ENCODE measurements at regions of chr19 and their contacts with region 1.

Region 1: GRCh38 chr19:1780272-1780958 is 27.1 kb downstream of the ONECUT3 start:
- DNase-seq: no peak
- ATAC-seq: no peak
- H3K4me3 ChIP-seq: no peak overlapping the region
- H3K27ac ChIP-seq: no peak overlapping the region
- H3K4me1 ChIP-seq: no peaks in the 10 kb centered on the region
- H3K27me3 ChIP-seq: peaks cover 0 to 25% of the 10 kb centered on the region in 2 donors
- CTCF ChIP-seq: no peak
- POLR2A ChIP-seq: no peak

Region 2: GRCh38 chr19:1555487-1556389 is 224.7 kb before region 1 on chr19:
- intact Hi-C with region 1: loop called in 1 of 2 experiments (anchors 10 kb)
- DNase-seq: no peak
- ATAC-seq: no peak
- H3K4me3 ChIP-seq: no peak overlapping the region
- H3K27ac ChIP-seq: no peak overlapping the region
- H3K4me1 ChIP-seq: no peaks in the 10 kb centered on the region
- H3K27me3 ChIP-seq: no peaks in the 10 kb centered on the region
- CTCF ChIP-seq: no peak
- POLR2A ChIP-seq: no peak

Region 3: GRCh38 chr19:1592024-1592754 is 188.2 kb before region 1 on chr19:
- intact Hi-C with region 1: no loop called
- DNase-seq: peak; percentile 87 to 91 (median 88)
- ATAC-seq: peak; percentile 68 to 85 (median 76)
- H3K4me3 ChIP-seq: peak overlapping the region; percentile 82 to 85 (median 84)
- H3K27ac ChIP-seq: peak overlapping the region; percentile 79 to 91 (median 88)
- H3K4me1 ChIP-seq: peaks cover 0 to 19% (median 8%) of the 10 kb centered on the region in 4 donors
- H3K27me3 ChIP-seq: no peaks in the 10 kb centered on the region
- CTCF ChIP-seq: no peak
- POLR2A ChIP-seq: peak; percentile 89

Region 4: DNA sequence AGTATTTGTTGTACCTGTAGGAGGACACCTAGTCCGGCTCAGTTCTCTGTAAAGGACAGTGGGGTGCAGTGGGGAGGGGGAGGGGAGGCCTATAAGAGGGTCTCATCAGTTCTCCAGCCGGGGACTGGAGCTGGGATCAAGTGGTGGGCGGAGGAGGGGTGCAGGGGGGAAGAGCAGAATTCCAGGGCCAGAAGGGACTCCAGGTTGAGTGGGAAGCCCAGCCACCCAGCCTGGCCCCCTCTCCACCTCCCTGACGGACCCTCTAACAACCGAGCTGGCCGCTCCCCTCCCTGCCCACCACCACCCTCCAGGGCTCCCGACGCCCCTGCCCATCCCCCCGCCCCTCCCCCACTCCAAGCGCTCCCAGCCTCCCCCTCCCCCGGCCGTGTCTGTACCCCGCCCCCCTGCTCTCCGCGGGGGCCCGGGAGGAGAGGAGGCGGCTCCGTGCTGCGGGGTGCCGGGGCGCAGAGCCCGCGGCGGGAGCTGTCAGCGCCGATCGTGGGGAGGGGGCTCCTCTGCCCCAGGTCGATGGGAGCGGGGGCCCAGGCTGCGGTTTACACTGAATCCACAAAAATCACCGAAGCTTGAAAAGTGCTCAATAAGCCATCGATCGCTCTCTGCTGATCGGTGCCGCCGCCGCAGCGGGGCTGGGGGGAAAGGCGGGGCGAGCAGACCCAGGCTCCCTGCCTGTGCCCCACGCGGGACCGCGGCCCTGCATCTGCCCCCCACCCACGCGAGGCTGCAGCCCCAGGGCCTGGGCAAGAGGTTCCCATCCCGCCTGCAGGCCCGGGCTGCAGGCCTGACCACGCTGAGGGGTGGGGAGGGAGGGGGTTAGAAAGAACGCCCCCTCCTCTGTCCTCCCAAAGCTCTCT is 61.8 kb before region 1 on chr19:
- intact Hi-C with region 1: no loop called
- DNase-seq: no peak
- ATAC-seq: no peak
- H3K4me3 ChIP-seq: no peak overlapping the region
- H3K27ac ChIP-seq: no peak overlapping the region
- H3K4me1 ChIP-seq: no peaks in the 10 kb centered on the region
- H3K27me3 ChIP-seq: peaks cover 0 to 10% of the 10 kb centered on the region in 2 donors
- CTCF ChIP-seq: no peak
- POLR2A ChIP-seq: no peak

Region 5: DNA sequence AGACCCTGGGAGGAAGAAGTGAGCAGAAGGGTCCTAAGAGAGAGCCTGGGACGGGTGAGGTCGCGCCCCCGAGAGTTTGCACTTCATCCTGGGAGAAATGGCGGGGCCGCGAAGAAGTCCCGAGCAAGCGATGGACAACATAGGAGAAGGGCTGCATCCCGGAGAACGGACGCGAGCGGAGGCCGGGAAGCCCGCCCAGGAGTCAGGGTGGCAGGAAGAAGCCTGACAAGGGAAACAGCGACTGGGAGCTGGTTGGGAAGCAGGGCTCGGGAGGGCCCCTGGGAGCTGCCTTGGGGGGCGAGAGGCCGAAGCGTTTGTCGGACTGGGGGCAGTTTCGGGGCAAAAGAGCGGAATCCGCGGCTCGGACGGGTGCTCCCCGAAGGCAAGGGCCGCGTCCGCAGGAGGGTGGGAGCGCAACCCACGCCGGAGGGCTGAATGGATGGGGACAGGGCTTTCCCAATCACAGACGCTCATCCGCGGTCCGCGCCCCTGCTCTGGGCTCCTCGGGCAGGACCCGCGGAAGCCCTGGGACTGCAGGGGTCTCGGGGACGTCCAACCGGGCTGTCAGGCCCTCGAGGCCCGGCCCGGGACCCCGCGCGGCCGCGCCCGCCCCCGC is 104.4 kb after region 1 on chr19:
- intact Hi-C with region 1: no loop called
- DNase-seq: peak in 1 of 3 donors; percentile 56
- ATAC-seq: peak in 2 of 4 donors; percentile 4 to 15
- H3K4me3 ChIP-seq: peak overlapping the region; percentile 63 to 89 (median 80)
- H3K27ac ChIP-seq: peak overlapping the region; percentile 70 to 88 (median 86)
- H3K4me1 ChIP-seq: peaks cover 0 to 9% (median 2%) of the 10 kb centered on the region in 4 donors
- H3K27me3 ChIP-seq: no peaks in the 10 kb centered on the region
- CTCF ChIP-seq: no peak
- POLR2A ChIP-seq: no peak